T-cell (primary cell): ENCODE measurements at regions of chrX and their contacts with region 1.

Region 1: DNA sequence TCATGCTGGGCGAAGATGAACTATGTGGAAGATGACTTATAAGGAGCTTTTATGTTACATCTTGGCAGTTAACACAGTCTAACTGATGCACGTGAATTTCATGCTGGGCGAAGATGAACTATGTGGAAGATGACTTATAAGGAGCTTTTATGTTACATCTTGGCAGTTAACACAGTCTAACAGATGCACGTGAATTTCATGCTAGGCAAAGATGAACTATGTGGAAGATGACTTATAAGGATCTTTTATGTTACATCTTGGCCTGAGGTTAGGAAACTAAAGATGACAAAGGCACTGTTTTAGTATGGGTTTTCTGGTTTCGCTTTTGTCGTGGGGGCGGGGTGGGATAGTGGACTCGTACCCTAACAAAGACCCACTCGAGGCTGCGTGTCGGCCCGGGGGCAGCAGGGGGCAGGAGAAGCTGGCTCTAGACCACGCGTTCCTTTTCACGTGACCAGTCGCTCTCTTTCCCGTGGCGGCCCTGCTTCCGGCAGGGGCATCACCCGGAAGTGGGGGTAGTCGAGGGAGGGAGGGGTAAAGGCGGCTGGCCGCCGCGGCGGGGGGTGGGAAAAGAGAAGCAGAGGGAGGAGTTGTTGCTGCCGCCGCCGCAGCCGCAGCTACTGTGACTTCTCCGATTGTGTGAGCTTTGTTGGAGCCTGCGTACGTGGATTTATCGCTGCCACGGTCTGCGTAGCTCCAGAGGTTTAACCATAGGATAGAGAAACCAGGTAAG is at the start of gene ATP7A:
- DNase-seq: peak; percentile 71 to 94 (median 90)
- ATAC-seq: peak; percentile 92 to 94 (median 92)
- H3K4me3 ChIP-seq: peak within 1 kb of the TSS; percentile 66 to 69
- H3K4me3 Mint-ChIP-seq: peak within 1 kb of the TSS; percentile 86 to 99 (median 98)
- H3K27ac ChIP-seq: peak within 1 kb of the TSS; percentile 86
- H3K27ac Mint-ChIP-seq: peak within 1 kb of the TSS; percentile 99
- H3K4me1 ChIP-seq: peaks cover 6 to 7% of the 10 kb centered on the region in 2 experiments
- H3K4me1 Mint-ChIP-seq: peaks cover 20 to 33% (median 20%) of the 10 kb centered on the region in 3 donors
- H3K27me3 ChIP-seq: no peaks in the 10 kb centered on the region
- H3K27me3 Mint-ChIP-seq: no peaks in the 10 kb centered on the region
- total RNA-seq, gene ATP7A: 11.2 to 13.6 (median 12.7) TPM

Region 2: DNA sequence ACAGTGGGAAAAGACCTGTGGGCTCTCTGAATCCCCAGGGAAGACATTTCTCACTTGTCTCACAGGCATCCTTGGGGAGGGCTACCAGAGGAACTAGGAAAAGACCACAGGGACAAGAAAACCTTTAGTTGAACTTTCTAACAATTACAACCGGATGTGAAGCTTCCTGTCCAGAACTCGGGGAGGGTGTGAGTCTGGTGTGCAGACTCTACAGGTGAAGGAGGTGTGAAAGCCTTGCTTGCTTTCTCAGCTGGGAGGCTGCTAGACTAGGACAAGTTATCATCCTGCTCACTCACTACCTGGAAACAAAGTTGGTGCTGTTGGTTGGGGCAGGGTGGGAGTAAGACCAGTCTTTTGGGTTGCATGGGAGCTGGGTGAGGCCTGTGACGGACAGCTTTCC is 1896.0 kb before region 1 on chrX:
- CTCF ChIA-PET with region 1: interaction called in 1 of 2 experiments, 11 read pairs
- POLR2A ChIA-PET with region 1: no interaction called
- DNase-seq: no peak
- ATAC-seq: no peak
- H3K4me3 ChIP-seq: no peak overlapping the region
- H3K4me3 Mint-ChIP-seq: no peak overlapping the region
- H3K27ac ChIP-seq: no peak overlapping the region
- H3K27ac Mint-ChIP-seq: no peak overlapping the region
- H3K4me1 ChIP-seq: no peaks in the 10 kb centered on the region
- H3K4me1 Mint-ChIP-seq: no peaks in the 10 kb centered on the region
- H3K27me3 ChIP-seq: no peaks in the 10 kb centered on the region
- H3K27me3 Mint-ChIP-seq: peaks cover 9 to 57% of the 10 kb centered on the region in 2 donors

Region 3: GRCh38 chrX:77899081-77899828 is 11.0 kb before region 1 on chrX and contains the start of gene COX7B:
- CTCF ChIA-PET with region 1: interaction called, 5 to 44 read pairs
- POLR2A ChIA-PET with region 1: interaction called, 5 to 19 read pairs
- DNase-seq: peak in 34 of 35 experiments; percentile 23 to 92 (median 59)
- ATAC-seq: peak; percentile 66 to 72 (median 67)
- H3K4me3 ChIP-seq: peak within 1 kb of the TSS; percentile 78 to 81
- H3K4me3 Mint-ChIP-seq: peak within 1 kb of the TSS; percentile 82 to 96 (median 88)
- H3K27ac ChIP-seq: peak within 1 kb of the TSS; percentile 89
- H3K27ac Mint-ChIP-seq: peak within 1 kb of the TSS; percentile 88 to 95
- H3K4me1 ChIP-seq: peaks cover 5 to 9% of the 10 kb centered on the region in 2 experiments
- H3K4me1 Mint-ChIP-seq: peaks cover 19 to 29% (median 26%) of the 10 kb centered on the region in 3 donors
- H3K27me3 ChIP-seq: no peaks in the 10 kb centered on the region
- H3K27me3 Mint-ChIP-seq: no peaks in the 10 kb centered on the region
- total RNA-seq, gene COX7B: 101 to 119 (median 109) TPM

Region 4: GRCh38 chrX:77930581-77930980 is 20.3 kb after region 1 on chrX:
- CTCF ChIA-PET with region 1: no interaction called
- POLR2A ChIA-PET with region 1: no interaction called
- DNase-seq: no peak
- ATAC-seq: no peak
- H3K4me3 ChIP-seq: no peak overlapping the region
- H3K4me3 Mint-ChIP-seq: no peak overlapping the region
- H3K27ac ChIP-seq: no peak overlapping the region
- H3K27ac Mint-ChIP-seq: no peak overlapping the region
- H3K4me1 ChIP-seq: no peaks in the 10 kb centered on the region
- H3K4me1 Mint-ChIP-seq: peaks cover 4 to 14% (median 11%) of the 10 kb centered on the region in 3 donors
- H3K27me3 ChIP-seq: no peaks in the 10 kb centered on the region
- H3K27me3 Mint-ChIP-seq: no peaks in the 10 kb centered on the region

Region 5: GRCh38 chrX:78024349-78025108 is 114.3 kb after region 1 on chrX:
- CTCF ChIA-PET with region 1: interaction called, 7 to 16 read pairs
- POLR2A ChIA-PET with region 1: interaction called in 1 of 2 experiments, 4 read pairs
- DNase-seq: peak in 23 of 35 experiments; percentile 0 to 67 (median 8)
- ATAC-seq: peak; percentile 51 to 69 (median 60)
- H3K4me3 ChIP-seq: no peak overlapping the region
- H3K4me3 Mint-ChIP-seq: no peak overlapping the region
- H3K27ac ChIP-seq: no peak overlapping the region
- H3K27ac Mint-ChIP-seq: peak overlapping the region in 1 of 2 donors; percentile 17
- H3K4me1 ChIP-seq: no peaks in the 10 kb centered on the region
- H3K4me1 Mint-ChIP-seq: peaks cover 5 to 8% (median 5%) of the 10 kb centered on the region in 3 donors
- H3K27me3 ChIP-seq: no peaks in the 10 kb centered on the region
- H3K27me3 Mint-ChIP-seq: peaks cover 0 to 9% of the 10 kb centered on the region in 2 donors